Sciatic nerve (tissue), 2 donors: ENCODE measurements at regions of chr12 and their contacts with region 1.

Region 1: DNA sequence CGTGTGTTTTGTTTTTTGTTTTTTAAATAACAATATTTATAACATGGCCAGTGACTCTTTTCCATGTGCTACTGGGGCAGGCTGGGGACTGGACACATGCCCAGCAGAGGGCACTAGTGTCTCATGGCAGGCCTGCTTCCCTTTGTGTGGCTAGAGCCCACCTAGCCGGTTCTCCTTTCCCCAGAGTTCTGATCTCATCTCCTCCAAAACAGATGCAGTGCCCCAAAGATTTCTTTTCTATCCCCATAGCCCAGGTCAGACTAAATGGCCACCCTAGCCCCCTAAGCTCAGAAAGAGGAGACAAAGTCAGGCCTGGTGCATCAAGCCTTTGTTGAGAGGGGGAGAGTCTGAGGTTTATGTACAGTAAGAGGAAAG is 21.2 kb downstream of the PRPF40B start:
- DNase-seq: peak; percentile 89
- ATAC-seq: peak; percentile 88

Region 2: GRCh38 chr12:49491823-49492222 is 152.8 kb before region 1 on chr12:
- intact Hi-C with region 1: no loop called
- DNase-seq: no peak
- ATAC-seq: no peak

Region 3: DNA sequence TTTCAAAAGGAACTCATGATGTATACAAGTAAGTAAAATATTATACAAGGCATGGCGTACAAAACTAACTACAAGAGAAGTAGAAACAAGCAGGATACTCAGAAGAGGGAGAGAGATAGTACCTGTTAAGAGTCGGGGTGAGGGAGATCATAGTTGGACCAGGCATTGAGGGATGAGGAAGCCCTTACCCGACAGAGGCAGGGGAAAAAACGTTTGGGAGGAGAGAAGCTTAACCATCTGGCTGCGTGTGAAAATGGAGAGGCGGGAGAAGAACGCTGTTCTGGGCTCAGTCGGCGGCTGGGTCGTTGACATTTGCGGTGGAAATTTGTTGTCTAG is 63.2 kb after region 1 on chr12:
- intact Hi-C with region 1: loop called (anchors 2 kb)
- DNase-seq: no peak
- ATAC-seq: no peak

Region 4: GRCh38 chr12:50763639-50764285 is 1119.2 kb after region 1 on chr12 and contains the start of gene ATF1:
- intact Hi-C with region 1: loop called (anchors 5 kb)
- DNase-seq: peak; percentile 92
- ATAC-seq: peak; percentile 97
- total RNA-seq, gene ATF1: 44.2 TPM